ENCODE measurements at regions of chr19 and their contacts with region 1.

Region 1: GRCh38 chr19:48993175-48994034 is at the starts of genes GYS1 and RUVBL2:
- DNase-seq: peak; percentile 100
- ATAC-seq: peak; percentile 93
- H3K4me3 Mint-ChIP-seq: peak within 1 kb of the TSS; percentile 99
- H3K27ac Mint-ChIP-seq: peak within 1 kb of the TSS; percentile 97
- H3K4me1 Mint-ChIP-seq: peaks cover 31% of the 10 kb centered on the region
- H3K27me3 Mint-ChIP-seq: no peaks in the 10 kb centered on the region
- CTCF ChIP-seq: peak; percentile 85
- total RNA-seq, gene GYS1: 45.9 to 52.0 TPM (median 46.1 TPM) in 3 replicates
- total RNA-seq, gene RUVBL2: 168 to 178 TPM (median 169 TPM) in 3 replicates

Region 2: DNA sequence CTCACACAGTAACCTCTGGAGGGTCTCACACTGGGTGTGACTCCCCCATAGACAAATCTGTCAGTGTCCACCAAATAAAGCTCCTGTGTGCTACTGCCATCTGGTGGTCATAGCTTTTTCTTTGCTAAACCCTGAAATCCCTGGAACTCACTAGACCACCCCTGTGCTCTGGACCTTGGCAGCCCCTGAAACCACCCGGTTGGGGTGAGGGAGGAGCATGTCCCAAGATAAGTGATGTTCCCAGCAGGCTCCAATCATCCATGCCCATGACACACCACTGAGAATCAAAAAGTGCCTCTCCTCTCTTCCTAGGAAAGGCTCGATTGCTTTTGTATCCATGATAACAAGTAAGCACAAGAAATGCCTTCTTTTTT is 150.6 kb before region 1 on chr19:
- CTCF ChIA-PET with region 1: interaction called, 11 read pairs
- POLR2A ChIA-PET with region 1: no interaction called
- DNase-seq: peak; percentile 71
- ATAC-seq: peak; percentile 87
- H3K4me3 Mint-ChIP-seq: no peak overlapping the region
- H3K27ac Mint-ChIP-seq: no peak overlapping the region
- H3K4me1 Mint-ChIP-seq: peaks cover 6% of the 10 kb centered on the region
- H3K27me3 Mint-ChIP-seq: no peaks in the 10 kb centered on the region; the same call in 1 of the 2 replicates
- CTCF ChIP-seq: peak; percentile 70

Region 3: DNA sequence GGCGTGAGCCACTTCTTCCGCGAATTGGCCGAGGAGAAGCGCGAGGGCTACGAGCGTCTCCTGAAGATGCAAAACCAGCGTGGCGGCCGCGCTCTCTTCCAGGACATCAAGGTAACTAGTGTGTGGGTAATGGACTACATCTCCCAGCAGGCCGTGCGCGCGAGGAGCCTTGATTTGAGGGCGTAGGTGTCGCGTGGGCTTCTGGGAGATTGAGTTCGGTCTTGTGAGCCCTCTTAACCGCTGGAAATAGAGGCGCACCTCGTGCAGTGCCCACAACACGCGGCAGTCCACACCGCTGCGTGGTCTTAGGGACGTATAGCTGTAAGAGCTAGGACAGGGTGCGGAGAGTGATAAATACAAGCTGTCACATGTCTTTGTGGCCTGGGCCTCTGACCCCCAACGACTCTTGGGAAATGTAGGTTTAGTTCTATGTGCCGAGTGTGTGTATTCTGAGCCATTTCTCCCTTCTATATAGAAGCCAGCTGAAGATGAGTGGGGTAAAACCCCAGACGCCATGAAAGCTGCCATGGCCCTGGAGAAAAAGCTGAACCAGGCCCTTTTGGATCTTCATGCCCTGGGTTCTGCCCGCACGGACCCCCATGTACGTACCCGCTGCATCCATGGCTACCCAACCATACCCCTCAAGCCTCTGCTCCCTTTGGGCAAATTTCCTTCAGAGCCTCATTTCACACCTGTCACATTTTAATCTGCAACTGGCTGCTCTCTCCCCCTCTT is 27.4 kb before region 1 on chr19:
- CTCF ChIA-PET with region 1: interaction called, 60 read pairs
- POLR2A ChIA-PET with region 1: interaction called, 10 read pairs
- DNase-seq: peak; percentile 91
- ATAC-seq: peak; percentile 16
- H3K4me3 Mint-ChIP-seq: peak overlapping the region; percentile 99
- H3K27ac Mint-ChIP-seq: peak overlapping the region; percentile 93
- H3K4me1 Mint-ChIP-seq: peaks cover 37% of the 10 kb centered on the region
- H3K27me3 Mint-ChIP-seq: no peaks in the 10 kb centered on the region
- CTCF ChIP-seq: no peak

Region 4: GRCh38 chr19:49017666-49018351 is 24.4 kb after region 1 on chr19:
- CTCF ChIA-PET with region 1: interaction called, 58 read pairs
- POLR2A ChIA-PET with region 1: interaction called, 6 read pairs
- DNase-seq: peak; percentile 66
- ATAC-seq: peak; percentile 71
- H3K4me3 Mint-ChIP-seq: peak overlapping the region; percentile 73
- H3K27ac Mint-ChIP-seq: no peak overlapping the region
- H3K4me1 Mint-ChIP-seq: peaks cover 23% of the 10 kb centered on the region
- H3K27me3 Mint-ChIP-seq: peaks cover 45% of the 10 kb centered on the region
- CTCF ChIP-seq: no peak

Region 5: GRCh38 chr19:49097455-49098288 is 104.3 kb after region 1 on chr19:
- CTCF ChIA-PET with region 1: interaction called, 27 read pairs
- POLR2A ChIA-PET with region 1: no interaction called
- DNase-seq: peak; percentile 82
- ATAC-seq: peak; percentile 89
- H3K4me3 Mint-ChIP-seq: no peak overlapping the region
- H3K27ac Mint-ChIP-seq: peak overlapping the region; percentile 85
- H3K4me1 Mint-ChIP-seq: peaks cover 13% of the 10 kb centered on the region
- H3K27me3 Mint-ChIP-seq: no peaks in the 10 kb centered on the region
- CTCF ChIP-seq: peak; percentile 98

Region 6: DNA sequence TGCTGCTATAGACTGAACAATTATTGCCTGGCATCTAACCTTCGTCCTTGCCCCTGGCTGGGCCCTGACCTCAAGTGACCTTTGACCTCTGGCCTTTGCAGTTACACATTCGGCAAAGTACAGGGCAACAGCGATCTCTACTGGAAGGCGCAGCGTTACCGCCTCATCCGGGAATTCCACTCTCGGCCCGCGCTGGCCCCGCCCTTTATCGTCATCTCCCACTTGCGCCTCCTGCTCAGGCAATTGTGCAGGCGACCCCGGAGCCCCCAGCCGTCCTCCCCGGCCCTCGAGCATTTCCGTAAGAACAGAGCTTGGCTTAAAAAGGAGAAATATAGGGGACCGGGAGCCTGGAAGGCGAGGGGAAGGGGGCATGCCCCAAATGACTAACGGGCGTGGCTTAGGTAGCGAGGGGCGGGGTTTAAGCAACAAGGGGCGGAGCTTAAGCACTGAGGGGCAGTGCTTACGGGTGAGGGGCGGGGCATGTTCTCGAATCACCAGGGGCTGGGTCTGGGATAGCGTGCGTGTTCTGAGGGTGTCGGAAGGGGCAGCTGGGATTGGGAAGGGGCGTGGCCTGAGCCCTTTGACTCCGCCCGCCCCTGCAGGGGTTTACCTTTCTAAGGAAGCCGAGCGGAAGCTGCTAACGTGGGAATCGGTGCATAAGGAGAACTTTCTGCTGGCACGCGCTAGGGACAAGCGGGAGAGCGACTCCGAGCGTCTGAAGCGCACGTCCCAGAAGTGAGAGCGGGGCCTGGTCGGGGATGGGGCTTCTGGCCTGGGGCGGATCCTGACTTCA is 216.9 kb after region 1 on chr19:
- CTCF ChIA-PET with region 1: interaction called, 23 read pairs
- POLR2A ChIA-PET with region 1: no interaction called
- DNase-seq: peak; percentile 96
- ATAC-seq: peak; percentile 97
- H3K4me3 Mint-ChIP-seq: peak overlapping the region; percentile 75
- H3K27ac Mint-ChIP-seq: peak overlapping the region; percentile 92
- H3K4me1 Mint-ChIP-seq: peaks cover 7% of the 10 kb centered on the region
- H3K27me3 Mint-ChIP-seq: peaks cover 2% of the 10 kb centered on the region; the same call in 1 of the 2 replicates
- CTCF ChIP-seq: no peak

Measured in WTC11 (cell line).